H1 (cell line): ENCODE measurements at regions of chr16 and their contacts with region 1.

Region 1: DNA sequence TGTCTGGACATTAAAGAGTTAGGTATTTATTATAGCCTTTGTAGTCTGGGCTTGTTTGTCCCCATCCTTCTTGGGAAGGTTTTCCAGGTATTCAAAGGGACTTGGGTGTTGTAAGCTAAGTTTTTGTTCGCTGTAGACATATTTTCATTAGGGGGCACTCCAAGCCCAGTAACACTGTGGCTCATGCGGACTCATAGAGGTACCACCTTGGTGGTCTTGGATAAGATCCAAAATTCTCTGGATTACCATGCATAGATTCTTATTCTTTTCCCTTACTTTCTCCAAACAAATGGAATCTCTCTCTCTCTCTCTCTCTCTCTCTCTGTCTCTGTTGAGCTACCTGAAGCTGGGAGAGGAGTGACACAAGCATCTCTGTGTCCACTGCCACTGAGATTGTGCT is 48.9 kb downstream of the ERCC4 start:
- DNase-seq: no peak
- H3K4me3 ChIP-seq: no peak overlapping the region
- H3K27ac ChIP-seq: no peak overlapping the region
- H3K4me1 ChIP-seq: no peaks in the 10 kb centered on the region
- H3K27me3 ChIP-seq: no peaks in the 10 kb centered on the region
- CTCF ChIP-seq: peak in 2 of 3 experiments; percentile 36 to 38; a peak in 3 of 4 replicates
- EP300 ChIP-seq: no peak
- POLR2A ChIP-seq: no peak
- RAD21 ChIP-seq: peak; percentile 66 to 72

Region 2: DNA sequence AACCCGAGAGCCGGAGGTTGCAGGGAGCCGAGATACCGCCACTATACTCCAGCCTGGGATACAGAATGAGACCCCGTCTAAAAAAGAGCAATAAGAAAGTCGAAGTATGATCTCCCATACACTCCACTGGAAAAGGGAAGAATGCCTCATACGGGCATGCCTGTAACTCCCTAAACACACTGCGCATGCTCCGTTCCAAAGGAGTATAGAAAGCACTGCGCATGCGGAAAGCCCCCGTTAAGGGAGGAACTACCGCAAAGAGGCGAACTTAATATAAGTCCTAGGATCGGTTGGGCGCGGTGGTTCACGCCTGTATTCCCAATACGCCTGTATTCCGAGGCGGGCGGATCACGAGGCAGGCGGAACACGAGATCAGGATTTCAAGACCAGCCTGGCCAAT is 362.0 kb before region 1 on chr16:
- CTCF ChIA-PET with region 1: no interaction called
- POLR2A ChIA-PET with region 1: no interaction called
- DNase-seq: no peak
- H3K4me3 ChIP-seq: no peak overlapping the region
- H3K27ac ChIP-seq: no peak overlapping the region
- H3K4me1 ChIP-seq: peaks cover 0 to 12% (median 7%) of the 10 kb centered on the region in 4 experiments; a peak in 5 of 7 replicates
- H3K27me3 ChIP-seq: no peaks in the 10 kb centered on the region
- CTCF ChIP-seq: no peak
- EP300 ChIP-seq: no peak
- POLR2A ChIP-seq: no peak
- RAD21 ChIP-seq: no peak

Region 3: GRCh38 chr16:13873835-13874438 is 94.9 kb before region 1 on chr16:
- CTCF ChIA-PET with region 1: no interaction called
- POLR2A ChIA-PET with region 1: no interaction called
- DNase-seq: peak in 1 of 2 experiments; percentile 56
- H3K4me3 ChIP-seq: no peak overlapping the region
- H3K27ac ChIP-seq: no peak overlapping the region
- H3K4me1 ChIP-seq: no peaks in the 10 kb centered on the region
- H3K27me3 ChIP-seq: no peaks in the 10 kb centered on the region
- CTCF ChIP-seq: peak; percentile 50 to 74 (median 73)
- EP300 ChIP-seq: no peak
- POLR2A ChIP-seq: no peak
- RAD21 ChIP-seq: peak; percentile 88 to 91

Region 4: DNA sequence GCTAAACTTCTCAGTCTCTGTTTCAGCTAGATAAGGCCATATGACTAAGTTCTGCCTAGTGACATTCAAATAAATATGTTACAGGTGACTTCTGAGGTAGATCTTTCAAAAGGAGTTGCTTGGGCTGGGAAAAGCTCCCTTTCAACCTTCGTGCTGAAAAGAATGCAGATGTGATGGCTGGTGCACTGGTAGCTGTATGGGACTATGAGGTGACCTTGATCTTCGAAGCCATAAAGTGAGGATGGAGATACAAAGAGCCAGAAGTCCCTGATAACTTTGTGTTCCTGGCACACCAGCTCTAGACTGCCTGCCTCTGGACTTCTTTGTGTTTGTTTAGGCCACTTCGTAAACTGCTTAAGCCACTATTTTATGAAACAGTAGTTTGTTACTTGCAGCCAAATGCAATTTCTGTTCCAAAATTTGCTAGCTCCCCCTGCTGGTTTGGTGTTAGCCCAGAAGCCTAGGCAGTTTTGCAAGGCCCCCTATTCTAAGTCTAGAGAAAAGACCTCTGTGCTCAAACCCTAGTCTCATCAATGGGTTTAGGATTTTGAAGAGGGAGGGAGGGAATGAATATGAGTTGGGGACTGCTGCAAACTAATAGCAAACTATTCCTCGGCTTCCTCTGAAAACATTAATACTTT is 72.2 kb before region 1 on chr16:
- CTCF ChIA-PET with region 1: no interaction called
- POLR2A ChIA-PET with region 1: no interaction called
- DNase-seq: no peak
- H3K4me3 ChIP-seq: no peak overlapping the region
- H3K27ac ChIP-seq: no peak overlapping the region
- H3K4me1 ChIP-seq: no peaks in the 10 kb centered on the region
- H3K27me3 ChIP-seq: no peaks in the 10 kb centered on the region; a peak in 1 of 7 replicates
- CTCF ChIP-seq: peak in 2 of 3 experiments; percentile 22 to 28; a peak in 2 of 4 replicates
- EP300 ChIP-seq: no peak
- POLR2A ChIP-seq: no peak
- RAD21 ChIP-seq: peak; percentile 15 to 27; a peak in 3 of 4 replicates

Region 5: GRCh38 chr16:14018848-14019247 is 50.0 kb after region 1 on chr16:
- CTCF ChIA-PET with region 1: interaction called, 11 read pairs
- POLR2A ChIA-PET with region 1: no interaction called
- DNase-seq: no peak
- H3K4me3 ChIP-seq: no peak overlapping the region
- H3K27ac ChIP-seq: no peak overlapping the region
- H3K4me1 ChIP-seq: peaks cover 0 to 5% (median 0%) of the 10 kb centered on the region in 4 experiments; a peak in 1 of 7 replicates
- H3K27me3 ChIP-seq: no peaks in the 10 kb centered on the region
- CTCF ChIP-seq: peak in 2 of 3 experiments; percentile 4 to 30; a peak in 1 of 4 replicates
- EP300 ChIP-seq: no peak
- POLR2A ChIP-seq: no peak
- RAD21 ChIP-seq: peak in 1 of 2 experiments; percentile 44; a peak in 2 of 4 replicates

Region 6: DNA sequence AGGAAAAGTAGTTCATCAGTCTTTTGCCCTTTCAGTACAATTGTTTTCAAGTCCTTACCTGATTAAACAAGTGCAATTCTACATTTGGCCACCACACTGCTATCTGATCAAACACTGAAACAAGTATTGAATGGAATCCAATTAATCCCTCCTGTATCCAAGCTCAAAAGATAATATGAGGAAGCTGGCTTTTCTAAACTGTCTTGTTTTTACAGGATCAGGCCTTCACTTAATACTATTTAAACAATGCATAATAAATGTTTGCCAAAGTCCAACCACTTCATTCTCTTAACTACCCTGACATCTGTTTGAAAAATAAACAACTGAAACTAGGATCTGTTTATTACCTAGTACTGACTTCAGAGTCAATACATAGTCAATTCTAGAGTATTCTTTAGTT is 233.9 kb after region 1 on chr16:
- CTCF ChIA-PET with region 1: no interaction called
- POLR2A ChIA-PET with region 1: no interaction called
- DNase-seq: no peak
- H3K4me3 ChIP-seq: no peak overlapping the region
- H3K27ac ChIP-seq: no peak overlapping the region
- H3K4me1 ChIP-seq: no peaks in the 10 kb centered on the region; a peak in 1 of 7 replicates
- H3K27me3 ChIP-seq: no peaks in the 10 kb centered on the region
- CTCF ChIP-seq: peak in 1 of 3 experiments; percentile 24; a peak in 1 of 4 replicates
- EP300 ChIP-seq: no peak
- POLR2A ChIP-seq: no peak
- RAD21 ChIP-seq: no peak

Region 7: GRCh38 chr16:14240219-14240843 is 271.5 kb after region 1 on chr16:
- CTCF ChIA-PET with region 1: interaction called, 11 read pairs
- POLR2A ChIA-PET with region 1: no interaction called
- DNase-seq: no peak
- H3K4me3 ChIP-seq: no peak overlapping the region
- H3K27ac ChIP-seq: no peak overlapping the region
- H3K4me1 ChIP-seq: no peaks in the 10 kb centered on the region
- H3K27me3 ChIP-seq: no peaks in the 10 kb centered on the region
- CTCF ChIP-seq: no peak
- EP300 ChIP-seq: no peak
- POLR2A ChIP-seq: no peak
- RAD21 ChIP-seq: no peak